ENCODE measurements at regions of chr5 and their contacts with region 1.

Region 1: GRCh38 chr5:132767150-132767549 is 9.9 kb downstream of the SEPTIN8 start:
- DNase-seq: no peak
- H3K4me3 ChIP-seq: no peak overlapping the region
- H3K27me3 ChIP-seq: no peaks in the 10 kb centered on the region
- CTCF ChIP-seq: no peak

Region 2: DNA sequence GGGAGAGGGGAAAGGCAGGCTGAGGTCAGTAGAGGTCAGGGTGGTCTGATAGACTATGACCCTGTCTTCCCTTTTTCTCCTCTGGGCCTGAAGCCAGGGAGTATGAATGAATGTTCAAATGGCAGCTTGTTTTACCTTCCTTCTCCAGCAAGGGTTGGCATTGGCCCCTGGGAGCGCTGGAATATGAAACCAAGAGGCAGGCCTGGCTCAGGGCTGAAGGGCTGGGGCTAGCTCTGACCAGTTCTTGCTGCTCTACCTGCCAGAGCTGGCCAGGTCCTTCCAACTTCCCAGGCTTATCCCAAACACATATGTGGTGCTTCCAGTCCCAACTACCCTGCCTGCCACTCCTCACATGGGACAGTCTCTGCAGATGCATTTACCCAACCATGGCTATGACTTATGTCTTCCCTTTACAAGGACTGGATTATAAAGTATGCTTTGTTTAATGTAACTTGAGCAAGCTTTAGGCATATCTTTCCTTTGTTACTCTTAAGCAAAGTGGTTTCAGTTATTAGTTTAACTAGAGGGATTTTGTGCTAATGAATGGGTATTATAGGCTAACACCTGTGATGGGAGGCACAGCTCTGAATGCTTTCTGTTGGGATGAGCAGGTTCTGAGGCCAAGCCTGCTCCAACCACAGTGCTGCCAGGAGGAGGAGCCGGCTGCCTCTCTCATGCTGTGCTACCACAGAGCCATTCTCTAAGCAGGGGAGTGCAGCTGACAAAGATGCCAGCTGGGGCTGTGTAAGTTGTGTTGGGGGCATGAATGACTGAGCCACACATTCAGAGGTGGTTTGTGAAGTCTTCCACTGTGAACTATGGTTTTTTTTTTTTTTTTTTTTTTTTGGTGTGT is 13.8 kb before region 1 on chr5:
- CTCF ChIA-PET with region 1: interaction called, 10 read pairs
- POLR2A ChIA-PET with region 1: interaction called, 3 read pairs
- DNase-seq: no peak
- H3K4me3 ChIP-seq: no peak overlapping the region
- H3K27me3 ChIP-seq: no peaks in the 10 kb centered on the region
- CTCF ChIP-seq: 0 out of 2 replicates have a peak, but pooled peaks have one; percentile 14

Measured in BJ (cell line).